Posterior vena cava (tissue), 2 donors: ENCODE measurements at regions of chr19 and their contacts with region 1.

Region 1: DNA sequence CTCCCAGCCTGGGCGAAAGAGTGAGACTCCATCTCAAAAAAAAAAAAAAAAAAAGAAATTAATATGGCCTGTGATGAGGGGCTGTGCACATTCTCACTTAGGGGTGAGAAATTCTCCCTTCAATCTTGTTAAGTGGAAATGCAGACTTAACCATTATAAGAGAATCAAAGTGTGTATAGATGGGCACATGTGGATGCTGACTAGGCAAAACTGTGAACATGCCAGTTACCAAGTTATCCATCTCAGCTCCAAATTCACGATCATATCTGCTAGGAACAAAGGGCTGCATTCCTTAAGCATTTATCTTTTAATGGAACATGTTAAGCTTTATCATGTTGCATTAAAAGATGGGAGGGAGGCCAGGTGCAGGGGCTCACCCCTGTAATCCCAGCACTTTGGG is 4.3 kb downstream of the ZNF560 start:
- DNase-seq: no peak

Region 2: GRCh38 chr19:8641908-8642547 is 852.1 kb before region 1 on chr19:
- intact Hi-C with region 1: loop called in 1 of 2 experiments (anchors 5 kb)
- DNase-seq: no peak

Region 3: GRCh38 chr19:9453953-9454352 is 40.1 kb before region 1 on chr19:
- intact Hi-C with region 1: loop called in 1 of 2 experiments (anchors 5 kb)
- DNase-seq: no peak